Esophagus muscularis mucosa (tissue), 4 donors: ENCODE measurements at regions of chr11 and their contacts with region 1.

Region 1: DNA sequence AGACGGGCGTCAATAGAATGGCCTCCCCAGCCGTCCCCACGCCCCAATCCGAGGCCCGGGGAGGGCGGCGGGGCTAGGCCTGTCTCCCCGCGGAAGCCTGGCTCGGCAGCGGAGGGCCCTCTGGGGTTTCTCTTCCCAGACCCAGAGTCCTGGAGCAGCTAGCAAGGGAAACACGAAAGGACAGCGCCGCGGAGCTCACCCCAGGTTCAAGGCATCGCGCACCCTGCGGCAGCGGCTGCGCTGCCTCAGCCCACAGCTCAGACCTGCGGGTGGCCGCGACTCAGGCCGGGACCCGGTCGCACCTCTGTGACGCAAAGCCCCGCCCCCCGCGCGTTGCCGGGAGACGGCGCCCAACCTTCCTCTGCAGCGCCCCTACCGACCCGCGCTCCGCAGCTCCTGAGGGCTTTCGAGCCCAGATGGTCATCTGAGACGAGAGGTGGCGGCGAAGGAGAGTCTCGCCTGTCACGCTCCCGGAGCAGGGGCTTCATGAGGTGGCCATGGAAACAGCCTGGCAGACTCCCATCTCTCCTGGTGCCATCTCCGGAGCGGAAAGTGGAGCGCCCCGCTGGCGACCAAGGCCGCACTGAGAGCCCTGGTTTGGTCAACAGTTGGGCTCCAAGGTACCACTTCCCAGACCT is at the start of gene RNF141:
- DNase-seq: peak; percentile 98
- H3K4me3 ChIP-seq: peak within 1 kb of the TSS; percentile 72 to 97 (median 78)
- H3K27ac ChIP-seq: peak within 1 kb of the TSS; percentile 87 to 92 (median 89)
- H3K4me1 ChIP-seq: peaks cover 7 to 16% (median 14%) of the 10 kb centered on the region in 4 donors
- H3K27me3 ChIP-seq: no peaks in the 10 kb centered on the region
- CTCF ChIP-seq: peak; percentile 72 to 91 (median 87)
- EP300 ChIP-seq: no peak
- POLR2A ChIP-seq: peak; percentile 79
- total RNA-seq, gene RNF141: 24.1 to 39.3 (median 34.9) TPM

Region 2: GRCh38 chr11:10413268-10413667 is 127.8 kb before region 1 on chr11:
- intact Hi-C with region 1: loop called (anchors 5 kb)
- DNase-seq: peak; percentile 80
- H3K4me3 ChIP-seq: no peak overlapping the region
- H3K27ac ChIP-seq: no peak overlapping the region
- H3K4me1 ChIP-seq: peaks cover 0 to 15% (median 6%) of the 10 kb centered on the region in 4 donors
- H3K27me3 ChIP-seq: no peaks in the 10 kb centered on the region
- CTCF ChIP-seq: peak in 1 of 3 experiments; percentile 14
- EP300 ChIP-seq: no peak
- POLR2A ChIP-seq: no peak